ENCODE measurements at regions of chr19 and their contacts with region 1.

Region 1: DNA sequence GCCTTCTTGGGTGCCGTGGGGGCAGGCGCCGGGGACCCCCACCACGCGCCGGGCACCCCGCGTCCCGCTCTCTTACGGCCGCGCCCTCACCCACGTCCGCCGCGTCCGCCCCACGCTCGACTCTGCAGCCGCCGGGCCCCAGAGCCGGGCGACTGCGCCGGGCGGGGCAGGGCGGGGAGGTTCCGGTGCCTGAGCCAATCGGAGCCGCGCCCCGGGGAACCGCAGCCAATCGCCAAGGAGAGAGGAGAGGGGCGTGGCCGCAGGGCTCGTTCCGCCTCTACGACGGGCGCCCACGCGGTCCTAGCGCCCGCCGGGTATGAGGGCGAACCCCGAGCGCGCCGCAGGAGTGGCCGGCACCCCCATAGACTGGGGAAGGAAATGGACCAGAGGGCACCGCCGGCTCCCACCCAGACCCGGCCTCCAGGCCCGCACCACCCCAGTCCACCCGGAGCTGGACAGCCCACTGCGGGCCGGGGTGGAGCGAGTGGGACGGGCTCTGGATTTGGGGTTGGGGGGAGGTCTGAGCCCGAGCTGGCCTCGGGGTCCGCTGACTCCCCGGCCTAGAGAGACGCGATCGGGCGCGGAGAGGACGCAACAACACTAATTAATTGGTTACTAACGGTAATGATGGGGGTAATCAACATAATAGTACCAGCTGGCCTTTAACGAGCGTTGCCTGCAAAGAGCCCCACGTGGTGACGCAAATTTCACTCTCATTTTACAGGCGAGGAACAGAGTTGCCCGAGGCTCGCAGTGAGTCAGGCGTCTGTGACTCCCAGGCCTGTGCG is at the start of gene MFSD12:
- DNase-seq: peak; percentile 88 to 98 (median 93)
- ATAC-seq: peak; percentile 94
- H3K4me3 ChIP-seq: peak within 1 kb of the TSS; percentile 90
- H3K4me3 Mint-ChIP-seq: peak within 1 kb of the TSS; percentile 92 to 100 (median 96)
- H3K27ac ChIP-seq: peak within 1 kb of the TSS; percentile 83
- H3K27ac Mint-ChIP-seq: peak within 1 kb of the TSS; percentile 92 to 97 (median 95)
- H3K4me1 ChIP-seq: peaks cover 25 to 30% of the 10 kb centered on the region in 2 donors
- H3K4me1 Mint-ChIP-seq: peaks cover 18 to 40% (median 38%) of the 10 kb centered on the region in 7 donors
- H3K27me3 ChIP-seq: no peaks in the 10 kb centered on the region
- H3K27me3 Mint-ChIP-seq: no peaks in the 10 kb centered on the region
- total RNA-seq, gene MFSD12: 95.2 to 153 (median 101) TPM

Region 2: DNA sequence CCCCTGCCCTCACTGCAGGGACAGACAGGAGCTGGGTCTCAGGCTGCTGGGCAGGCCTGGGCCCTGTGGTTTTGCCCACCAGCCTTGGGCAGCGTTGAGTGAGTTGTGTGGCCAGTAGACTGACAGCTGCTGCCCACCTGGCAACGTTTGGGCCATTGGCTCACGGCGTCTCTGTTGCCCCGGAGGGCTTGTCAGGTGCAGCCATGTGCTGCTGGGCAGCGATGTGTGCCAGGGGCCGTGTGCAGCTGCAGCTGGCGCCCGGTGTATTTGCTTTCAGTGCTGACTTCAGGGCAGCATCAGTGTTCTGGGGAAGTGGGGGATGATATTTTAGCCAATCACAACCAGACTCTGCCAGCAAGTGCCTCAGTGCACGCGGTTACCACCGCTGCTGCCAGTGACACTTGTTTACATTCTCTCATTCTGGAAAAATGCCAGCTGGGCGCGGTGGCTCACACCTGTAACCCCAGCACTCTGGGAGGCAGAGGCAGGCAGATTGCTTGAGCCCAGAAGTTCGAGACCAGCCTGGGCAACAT is 40.9 kb before region 1 on chr19:
- CTCF ChIA-PET with region 1: no interaction called
- POLR2A ChIA-PET with region 1: no interaction called
- intact Hi-C with region 1: no loop called
- DNase-seq: peak in 7 of 9 donors; percentile 37 to 72 (median 63)
- ATAC-seq: peak; percentile 73
- H3K4me3 ChIP-seq: no peak overlapping the region
- H3K4me3 Mint-ChIP-seq: peak overlapping the region in 4 of 10 donors; percentile 21 to 58 (median 34)
- H3K27ac ChIP-seq: peak overlapping the region; percentile 27
- H3K27ac Mint-ChIP-seq: peak overlapping the region in 6 of 9 donors; percentile 32 to 90 (median 82)
- H3K4me1 ChIP-seq: peaks cover 7 to 11% of the 10 kb centered on the region in 2 donors
- H3K4me1 Mint-ChIP-seq: peaks cover 16 to 58% (median 38%) of the 10 kb centered on the region in 7 donors
- H3K27me3 ChIP-seq: no peaks in the 10 kb centered on the region
- H3K27me3 Mint-ChIP-seq: no peaks in the 10 kb centered on the region

Region 3: DNA sequence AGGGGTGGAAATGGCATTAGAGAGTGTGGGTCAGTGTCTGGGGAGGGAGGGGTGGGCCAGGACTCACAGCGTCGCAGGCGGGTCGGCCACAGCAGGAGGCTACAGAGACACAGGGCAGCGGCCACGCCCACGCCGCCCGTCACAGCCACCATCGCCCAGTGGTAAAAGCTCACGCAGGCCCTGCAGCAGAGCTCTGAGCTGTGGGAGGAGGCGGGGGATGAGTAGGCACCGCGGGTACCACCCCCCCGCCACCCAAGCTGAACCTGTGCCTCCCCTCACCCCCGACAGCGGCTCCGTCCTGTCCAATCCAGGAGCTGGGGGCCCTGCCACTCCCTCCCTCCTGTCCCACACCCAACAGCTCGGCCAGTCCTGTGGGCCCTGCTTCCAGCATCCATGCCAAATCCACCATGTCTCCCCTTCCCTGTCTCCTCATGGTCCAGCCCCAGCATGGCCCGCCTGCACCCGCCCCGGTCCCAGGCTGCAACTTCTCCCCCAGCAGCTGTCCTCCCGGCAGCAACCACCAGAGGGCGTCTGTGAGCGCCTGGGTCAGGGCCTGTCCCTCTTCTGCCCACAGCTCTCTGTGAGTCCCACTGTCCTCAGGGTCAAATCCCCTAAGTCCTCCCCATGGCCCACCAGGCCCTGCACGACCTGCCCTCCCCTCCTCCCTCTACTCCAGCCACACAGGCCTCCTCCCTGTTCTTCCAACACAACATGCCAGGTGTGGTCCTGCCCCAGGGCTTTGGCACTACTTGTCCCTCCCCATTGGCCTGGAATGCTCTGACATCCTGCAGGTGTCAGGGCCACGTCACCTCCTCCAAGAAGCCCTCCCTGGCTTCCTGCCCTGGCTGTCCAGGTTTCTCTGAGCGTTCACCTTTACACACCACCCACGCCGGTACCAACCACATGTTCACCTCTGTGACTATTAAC is 12.7 kb before region 1 on chr19:
- CTCF ChIA-PET with region 1: interaction called, 30 read pairs
- POLR2A ChIA-PET with region 1: interaction called, 25 read pairs
- intact Hi-C with region 1: loop called in 1 of 2 experiments (anchors 1 kb)
- DNase-seq: peak; percentile 52 to 89 (median 70)
- ATAC-seq: peak; percentile 77
- H3K4me3 ChIP-seq: no peak overlapping the region
- H3K4me3 Mint-ChIP-seq: peak overlapping the region in 1 of 10 donors; percentile 7
- H3K27ac ChIP-seq: peak overlapping the region; percentile 19
- H3K27ac Mint-ChIP-seq: peak overlapping the region in 8 of 9 donors; percentile 46 to 81 (median 71)
- H3K4me1 ChIP-seq: no peaks in the 10 kb centered on the region
- H3K4me1 Mint-ChIP-seq: peaks cover 4 to 17% (median 11%) of the 10 kb centered on the region in 7 donors
- H3K27me3 ChIP-seq: no peaks in the 10 kb centered on the region
- H3K27me3 Mint-ChIP-seq: no peaks in the 10 kb centered on the region

Region 4: DNA sequence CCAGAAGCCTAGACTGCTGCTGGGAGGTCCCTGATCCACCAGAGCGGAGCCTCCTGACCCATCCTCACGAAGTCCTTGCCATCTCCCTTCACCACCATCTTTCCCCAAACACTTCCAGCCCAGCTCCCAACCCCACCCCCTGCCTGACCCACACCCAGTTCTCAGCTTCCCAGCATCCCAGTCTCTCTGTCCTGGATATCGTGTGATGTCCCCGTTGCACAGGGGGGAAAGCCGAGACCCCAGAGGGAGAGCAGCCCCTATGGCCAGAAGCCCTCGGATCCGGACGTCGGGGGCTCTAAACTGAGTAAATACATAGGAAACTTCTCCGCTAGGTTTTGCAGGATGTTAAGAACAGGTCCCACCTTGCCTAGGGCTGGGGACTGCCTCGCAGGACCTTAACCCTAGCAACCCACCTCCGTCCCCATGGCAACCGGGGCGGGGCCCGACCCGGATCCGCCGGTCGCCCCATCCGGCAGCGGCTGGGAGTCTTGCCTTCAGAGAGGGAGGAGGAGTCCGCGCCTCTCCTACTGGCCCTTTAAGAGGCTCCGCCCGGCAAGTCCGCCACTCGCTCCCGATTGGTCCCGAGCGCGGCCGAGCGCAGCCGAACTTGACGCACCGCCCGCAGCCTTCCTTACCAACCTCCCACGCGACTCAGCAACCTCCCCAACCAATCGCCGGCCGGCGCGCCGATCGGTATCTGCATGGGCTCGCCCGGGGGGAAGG is 14.6 kb after region 1 on chr19:
- CTCF ChIA-PET with region 1: interaction called, 4 read pairs
- POLR2A ChIA-PET with region 1: interaction called, 15 read pairs
- intact Hi-C with region 1: loop called (anchors 1 kb)
- DNase-seq: peak; percentile 94 to 99 (median 98)
- ATAC-seq: peak; percentile 96
- H3K4me3 ChIP-seq: peak overlapping the region; percentile 75
- H3K4me3 Mint-ChIP-seq: peak overlapping the region; percentile 72 to 91 (median 82)
- H3K27ac ChIP-seq: peak overlapping the region; percentile 62
- H3K27ac Mint-ChIP-seq: peak overlapping the region in 8 of 9 donors; percentile 30 to 84 (median 61)
- H3K4me1 ChIP-seq: peaks cover 12 to 13% of the 10 kb centered on the region in 2 donors
- H3K4me1 Mint-ChIP-seq: peaks cover 11 to 29% (median 14%) of the 10 kb centered on the region in 7 donors
- H3K27me3 ChIP-seq: no peaks in the 10 kb centered on the region
- H3K27me3 Mint-ChIP-seq: no peaks in the 10 kb centered on the region

Region 5: GRCh38 chr19:3606690-3607289 is 49.1 kb after region 1 on chr19 and contains the start of gene TBXA2R:
- CTCF ChIA-PET with region 1: interaction called, 4 read pairs
- POLR2A ChIA-PET with region 1: interaction called, 9 read pairs
- intact Hi-C with region 1: loop called in 1 of 2 experiments (anchors 5 kb)
- DNase-seq: peak in 6 of 9 donors; percentile 33 to 68 (median 46)
- ATAC-seq: peak; percentile 58
- H3K4me3 ChIP-seq: peak within 1 kb of the TSS; percentile 44
- H3K4me3 Mint-ChIP-seq: peak within 1 kb of the TSS in 8 of 10 donors; percentile 45 to 69 (median 58)
- H3K27ac ChIP-seq: peak within 1 kb of the TSS; percentile 65
- H3K27ac Mint-ChIP-seq: peak within 1 kb of the TSS in 5 of 9 donors; percentile 41 to 70 (median 53)
- H3K4me1 ChIP-seq: peaks cover 19 to 22% of the 10 kb centered on the region in 2 donors
- H3K4me1 Mint-ChIP-seq: peaks cover 7 to 15% (median 11%) of the 10 kb centered on the region in 7 donors
- H3K27me3 ChIP-seq: no peaks in the 10 kb centered on the region
- H3K27me3 Mint-ChIP-seq: peaks cover 0 to 9% (median 0%) of the 10 kb centered on the region in 5 donors
- total RNA-seq, gene TBXA2R: 0.73 to 5.9 (median 4.1) TPM

Region 6: GRCh38 chr19:3700221-3701032 is 142.8 kb after region 1 on chr19 and contains the start of gene PIP5K1C:
- CTCF ChIA-PET with region 1: interaction called, 4 read pairs
- POLR2A ChIA-PET with region 1: no interaction called
- intact Hi-C with region 1: loop called in 1 of 2 experiments (anchors 10 kb)
- DNase-seq: peak; percentile 82 to 98 (median 90)
- ATAC-seq: peak; percentile 100
- H3K4me3 ChIP-seq: peak within 1 kb of the TSS; percentile 66
- H3K4me3 Mint-ChIP-seq: peak within 1 kb of the TSS; percentile 88 to 97 (median 92)
- H3K27ac ChIP-seq: peak within 1 kb of the TSS; percentile 67
- H3K27ac Mint-ChIP-seq: peak within 1 kb of the TSS in 8 of 9 donors; percentile 60 to 91 (median 82)
- H3K4me1 ChIP-seq: peaks cover 0 to 9% of the 10 kb centered on the region in 2 donors
- H3K4me1 Mint-ChIP-seq: peaks cover 6 to 41% (median 28%) of the 10 kb centered on the region in 7 donors
- H3K27me3 ChIP-seq: no peaks in the 10 kb centered on the region
- H3K27me3 Mint-ChIP-seq: peaks cover 0 to 6% (median 0%) of the 10 kb centered on the region in 5 donors
- total RNA-seq, gene PIP5K1C: 21.5 to 32.4 (median 30.7) TPM